ENCODE measurements at regions of chr15 and their contacts with region 1.

Region 1: GRCh38 chr15:37100109-37100965 is at the start of gene MEIS2:
- DNase-seq: peak; percentile 94 to 95 (median 95)
- H3K4me3 ChIP-seq: peak within 1 kb of the TSS; percentile 81
- H3K27ac ChIP-seq: peak within 1 kb of the TSS; percentile 91 to 94
- H3K4me1 ChIP-seq: peaks cover 2% of the 10 kb centered on the region
- H3K27me3 ChIP-seq: no peaks in the 10 kb centered on the region
- CTCF ChIP-seq: peak in 1 of 3 donors; percentile 20
- EP300 ChIP-seq: no peak
- POLR2A ChIP-seq: peak; percentile 75
- total RNA-seq, gene MEIS2: 27.7 to 73.7 (median 47.7) TPM

Region 2: DNA sequence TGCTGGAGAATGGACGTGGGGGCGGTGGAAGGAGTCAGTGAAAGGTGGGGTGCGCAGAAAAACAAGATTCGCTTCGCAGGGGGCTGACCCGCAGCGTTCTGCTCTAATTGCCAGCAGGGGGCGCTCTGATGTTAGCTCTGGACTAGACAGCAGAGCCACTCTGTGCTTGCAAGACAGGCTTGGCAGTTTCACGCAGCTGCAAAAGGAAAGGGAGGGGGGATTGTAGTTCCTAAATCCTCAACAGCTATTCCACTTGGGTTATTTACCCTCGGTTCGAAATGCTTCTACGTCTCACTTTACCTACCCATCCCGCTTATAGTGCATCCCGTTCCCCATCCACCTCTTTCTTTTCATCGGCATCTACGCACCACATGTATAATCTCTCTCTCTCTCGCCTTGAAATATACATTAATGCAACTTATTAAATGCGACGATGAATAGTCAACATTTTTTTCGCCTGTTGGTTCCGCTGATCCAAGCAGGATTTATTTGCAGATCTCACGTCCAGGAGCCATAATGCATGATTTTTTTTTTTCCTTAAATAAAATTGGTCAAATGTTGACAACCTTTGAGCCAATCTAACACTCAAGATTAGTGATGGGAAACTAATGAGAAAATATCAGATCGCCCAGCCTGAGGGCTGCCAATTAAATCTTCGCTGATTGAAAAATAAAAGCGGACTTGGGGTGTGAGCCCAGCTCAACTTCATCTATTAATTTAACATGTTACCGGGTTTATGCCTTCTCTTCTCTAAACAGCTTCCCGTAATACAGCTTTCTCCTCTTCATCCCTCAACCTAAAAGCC is 216.4 kb before region 1 on chr15:
- intact Hi-C with region 1: loop called in 2 of 4 experiments (anchors 5 to 10 kb)
- DNase-seq: peak; percentile 86 to 94 (median 89)
- H3K4me3 ChIP-seq: peak overlapping the region; percentile 36
- H3K27ac ChIP-seq: no peak overlapping the region
- H3K4me1 ChIP-seq: peaks cover 3% of the 10 kb centered on the region
- H3K27me3 ChIP-seq: no peaks in the 10 kb centered on the region
- CTCF ChIP-seq: peak; percentile 67 to 77 (median 76)
- EP300 ChIP-seq: no peak
- POLR2A ChIP-seq: no peak

Region 3: GRCh38 chr15:37015035-37015434 is 85.3 kb before region 1 on chr15:
- intact Hi-C with region 1: loop called in 3 of 4 experiments (anchors 5 to 10 kb)
- DNase-seq: no peak
- H3K4me3 ChIP-seq: no peak overlapping the region
- H3K27ac ChIP-seq: no peak overlapping the region
- H3K4me1 ChIP-seq: peaks cover 13% of the 10 kb centered on the region
- H3K27me3 ChIP-seq: no peaks in the 10 kb centered on the region
- CTCF ChIP-seq: no peak
- EP300 ChIP-seq: no peak
- POLR2A ChIP-seq: no peak

Region 4: DNA sequence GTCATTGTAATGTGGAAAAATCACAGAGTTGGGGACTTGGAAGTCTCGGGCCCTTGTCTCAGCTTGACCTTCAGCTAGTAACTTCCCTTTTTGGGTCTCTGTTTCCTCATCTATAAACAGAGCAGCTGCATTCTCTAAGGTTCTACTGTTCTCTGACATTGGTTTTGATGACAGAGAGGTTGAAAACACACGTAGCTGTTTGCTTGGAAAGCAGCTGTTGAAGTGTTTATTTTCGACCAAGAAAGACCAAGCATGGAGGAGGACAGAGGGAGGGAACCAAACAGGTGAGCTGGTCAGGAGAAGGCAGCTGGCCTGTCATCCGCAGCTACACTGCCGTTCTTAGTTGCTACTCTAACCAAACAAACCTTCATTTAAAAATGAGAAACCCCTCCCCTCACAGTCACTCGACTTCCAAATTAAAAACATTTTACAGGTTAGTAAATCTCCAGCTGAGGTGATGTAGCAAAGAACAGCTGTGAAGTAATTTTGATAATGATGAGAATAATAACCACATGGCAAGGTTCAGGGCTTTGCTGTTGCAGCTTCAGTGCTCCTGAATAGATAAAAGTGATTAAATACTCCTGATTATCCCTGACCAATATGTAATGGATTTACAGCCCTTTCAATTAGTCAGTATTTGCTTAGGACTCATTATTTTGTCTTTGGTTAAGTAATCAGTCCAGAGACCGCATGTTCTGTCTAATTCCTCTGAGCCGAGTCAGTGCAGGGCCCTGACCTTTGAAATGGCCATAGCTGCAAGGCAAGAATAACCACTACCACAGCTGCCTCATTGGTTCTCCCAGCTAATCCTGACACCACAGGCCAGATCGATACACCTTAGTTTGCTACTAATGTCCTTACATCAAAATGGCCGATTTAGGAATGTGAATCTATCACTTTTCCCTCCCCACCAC is 65.2 kb before region 1 on chr15:
- intact Hi-C with region 1: loop called in 1 of 4 experiments (anchors 10 kb)
- DNase-seq: no peak
- H3K4me3 ChIP-seq: no peak overlapping the region
- H3K27ac ChIP-seq: no peak overlapping the region
- H3K4me1 ChIP-seq: peaks cover 14% of the 10 kb centered on the region
- H3K27me3 ChIP-seq: no peaks in the 10 kb centered on the region
- CTCF ChIP-seq: no peak
- EP300 ChIP-seq: no peak
- POLR2A ChIP-seq: no peak

Region 5: GRCh38 chr15:38252481-38253412 is 1152.4 kb after region 1 on chr15 and contains the start of gene SPRED1:
- intact Hi-C with region 1: loop called in 1 of 4 experiments (anchors 5 kb)
- DNase-seq: peak; percentile 72 to 87 (median 77)
- H3K4me3 ChIP-seq: peak within 1 kb of the TSS; percentile 97
- H3K27ac ChIP-seq: peak within 1 kb of the TSS; percentile 99
- H3K4me1 ChIP-seq: peaks cover 2% of the 10 kb centered on the region
- H3K27me3 ChIP-seq: no peaks in the 10 kb centered on the region
- CTCF ChIP-seq: no peak
- EP300 ChIP-seq: no peak
- POLR2A ChIP-seq: peak; percentile 5
- total RNA-seq, gene SPRED1: 18.3 to 30.5 (median 20.6) TPM